Right ventricle myocardium superior (tissue), 1 donor: ENCODE measurements at regions of chr1 and their contacts with region 1.

Region 1: GRCh38 chr1:93447516-93448291 is at the start of gene FNBP1L:
- DNase-seq: peak; percentile 84
- ATAC-seq: peak; percentile 97
- total RNA-seq, gene FNBP1L: 21.0 TPM

Region 2: DNA sequence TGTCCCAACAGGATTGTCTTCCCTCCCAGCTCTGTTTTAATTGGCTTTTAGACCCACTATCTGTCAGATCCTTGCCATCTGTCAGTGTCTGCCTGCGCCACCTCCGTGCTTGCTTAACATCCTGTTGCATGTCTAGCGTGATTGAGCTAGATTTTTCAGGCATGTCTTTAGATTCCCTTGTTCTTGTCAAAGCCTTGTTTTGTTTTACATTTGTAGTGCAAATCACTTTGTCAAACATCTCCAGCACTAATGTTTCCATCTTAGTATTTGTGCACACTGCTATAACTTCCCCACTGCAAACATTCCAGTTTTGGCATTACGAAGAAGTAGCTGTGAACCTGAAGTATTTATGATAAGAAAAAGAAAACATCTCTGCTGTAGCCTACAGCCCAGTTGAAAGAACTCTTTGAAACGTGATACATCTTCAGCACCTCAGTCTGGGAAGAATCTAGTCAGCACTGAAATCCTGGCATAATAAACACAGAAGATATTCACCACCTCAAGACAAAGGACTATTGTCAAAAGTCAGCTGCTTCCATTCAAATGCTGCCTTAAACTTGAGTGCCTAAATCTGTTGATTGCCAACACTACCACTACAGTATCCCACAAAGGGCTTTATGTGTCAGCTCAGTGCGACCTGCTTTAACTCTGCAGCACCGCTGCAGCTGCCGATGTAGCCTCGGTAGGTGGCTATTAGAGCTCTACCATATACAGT is 105.2 kb after region 1 on chr1:
- intact Hi-C with region 1: loop called (anchors 10 kb)
- DNase-seq: peak; percentile 61
- ATAC-seq: peak; percentile 61

Region 3: GRCh38 chr1:93652323-93652949 is 204.7 kb after region 1 on chr1:
- intact Hi-C with region 1: no loop called
- DNase-seq: no peak
- ATAC-seq: no peak